HCT116 (cell line): ENCODE measurements at regions of chr6 and their contacts with region 1.

Region 1: DNA sequence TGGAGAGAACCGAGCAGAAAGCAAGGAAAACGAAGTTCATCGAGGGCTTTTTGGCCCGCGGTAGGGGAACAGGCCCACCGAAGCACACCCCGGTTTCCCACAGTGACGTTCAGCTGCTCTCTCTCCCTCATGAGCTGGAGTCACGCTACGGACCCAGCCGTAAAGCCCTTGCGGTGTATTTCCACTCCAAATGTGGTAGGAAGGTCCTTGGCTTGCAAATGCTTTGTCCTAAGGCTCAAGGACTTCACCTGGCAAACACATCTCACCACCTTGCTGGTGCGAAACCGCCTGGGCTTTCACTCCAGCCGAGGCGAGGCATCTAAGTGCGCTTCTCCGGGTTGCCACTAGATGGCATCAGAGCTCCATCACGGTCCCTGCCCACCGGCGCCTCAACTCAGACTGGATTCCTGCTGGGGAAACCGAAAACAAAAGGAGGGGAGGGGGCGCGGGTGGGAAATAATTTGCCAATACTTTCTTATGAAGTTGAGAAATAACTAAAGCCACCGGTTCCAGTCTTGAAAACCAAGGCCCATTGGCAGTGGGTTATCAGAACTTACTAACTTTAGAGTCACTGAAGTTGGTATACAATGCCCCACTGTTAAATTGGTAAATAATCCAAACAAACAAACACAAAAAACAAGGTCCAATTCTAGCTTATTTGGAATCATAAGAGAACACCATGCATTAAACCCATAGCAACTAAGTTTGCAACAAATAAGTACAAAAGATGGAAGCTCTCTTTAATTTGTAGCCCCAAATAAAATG is 13.4 kb upstream of the FOXC1 start:
- DNase-seq: no peak
- ATAC-seq: peak; percentile 95
- H3K4me3 ChIP-seq: no peak overlapping the region
- H3K27ac ChIP-seq: no peak overlapping the region
- H3K4me1 ChIP-seq: peaks cover 2 to 7% of the 10 kb centered on the region in 2 experiments; a peak in 2 of 4 replicates
- H3K27me3 ChIP-seq: no peaks in the 10 kb centered on the region
- CTCF ChIP-seq: peak; percentile 81 to 90 (median 89)
- POLR2A ChIP-seq: no peak
- RAD21 ChIP-seq: peak; percentile 95

Region 2: DNA sequence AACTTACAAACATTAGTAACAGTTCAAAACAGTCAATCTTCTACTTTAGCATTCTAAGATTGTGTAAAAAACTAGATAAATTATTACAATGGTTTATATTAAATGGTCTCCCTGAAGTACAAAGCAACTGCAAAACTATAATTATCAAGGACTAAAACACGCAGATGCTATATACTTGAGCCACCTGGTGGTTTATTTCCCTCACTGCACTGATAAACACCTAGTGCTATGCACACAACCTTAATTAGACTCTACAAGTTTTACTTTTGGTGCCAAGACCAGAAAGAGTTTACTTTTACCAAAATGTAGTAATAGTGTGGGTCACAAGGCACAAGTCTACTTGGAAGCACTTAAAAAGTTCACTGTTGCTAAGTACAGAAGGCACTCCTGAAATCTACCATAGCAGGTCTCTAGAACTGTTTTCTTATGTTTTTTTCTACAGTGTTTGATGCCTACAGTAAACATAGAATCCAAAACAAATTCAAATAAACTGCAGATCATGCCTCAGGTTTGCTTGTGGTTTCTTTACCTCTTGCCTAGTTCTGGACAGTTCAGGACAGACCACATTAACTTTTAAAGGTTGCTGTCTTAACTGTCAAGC is 599.9 kb after region 1 on chr6:
- CTCF ChIA-PET with region 1: no interaction called
- POLR2A ChIA-PET with region 1: no interaction called
- RAD21 ChIA-PET with region 1: no interaction called
- intact Hi-C with region 1: loop called (anchors 2 kb)
- DNase-seq: peak; percentile 19
- ATAC-seq: peak; percentile 67
- H3K4me3 ChIP-seq: no peak overlapping the region
- H3K27ac ChIP-seq: no peak overlapping the region
- H3K4me1 ChIP-seq: peaks cover 4 to 10% of the 10 kb centered on the region in 2 experiments; a peak in 3 of 4 replicates
- H3K27me3 ChIP-seq: no peaks in the 10 kb centered on the region
- CTCF ChIP-seq: peak; percentile 41 to 59 (median 47); a peak in 5 of 6 replicates
- POLR2A ChIP-seq: no peak
- RAD21 ChIP-seq: peak; percentile 69

Region 3: DNA sequence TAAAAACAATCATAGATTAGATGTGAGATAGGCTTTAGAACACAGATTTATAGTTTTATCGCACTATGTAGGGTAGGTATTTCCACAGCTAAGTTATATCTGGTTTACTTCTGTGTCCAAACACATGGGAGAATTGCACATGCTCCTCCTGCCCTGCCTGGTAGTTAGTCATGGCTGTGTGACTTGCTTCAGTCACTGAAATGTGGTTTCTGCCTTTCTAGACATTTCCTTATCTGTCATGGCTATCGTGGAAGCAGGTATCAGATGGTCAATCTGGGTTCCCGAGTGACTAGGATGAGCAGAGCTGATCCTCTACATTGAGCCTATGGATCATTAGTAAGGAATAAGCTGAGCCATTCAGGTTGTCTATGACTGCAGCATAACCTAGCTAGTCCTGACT is 766.9 kb after region 1 on chr6:
- CTCF ChIA-PET with region 1: no interaction called
- POLR2A ChIA-PET with region 1: no interaction called
- RAD21 ChIA-PET with region 1: no interaction called
- intact Hi-C with region 1: no loop called
- DNase-seq: no peak
- ATAC-seq: no peak
- H3K4me3 ChIP-seq: no peak overlapping the region
- H3K27ac ChIP-seq: no peak overlapping the region
- H3K4me1 ChIP-seq: no peaks in the 10 kb centered on the region
- H3K27me3 ChIP-seq: no peaks in the 10 kb centered on the region
- CTCF ChIP-seq: no peak
- POLR2A ChIP-seq: no peak
- RAD21 ChIP-seq: no peak

Region 4: GRCh38 chr6:2448820-2449571 is 852.7 kb after region 1 on chr6:
- CTCF ChIA-PET with region 1: interaction called, 3 read pairs
- POLR2A ChIA-PET with region 1: no interaction called
- RAD21 ChIA-PET with region 1: no interaction called
- intact Hi-C with region 1: loop called (anchors 2 kb)
- DNase-seq: peak; percentile 59
- ATAC-seq: peak; percentile 89
- H3K4me3 ChIP-seq: no peak overlapping the region
- H3K27ac ChIP-seq: no peak overlapping the region
- H3K4me1 ChIP-seq: peaks cover 0 to 4% of the 10 kb centered on the region in 2 experiments; a peak in 1 of 4 replicates
- H3K27me3 ChIP-seq: no peaks in the 10 kb centered on the region
- CTCF ChIP-seq: peak; percentile 69 to 83 (median 83)
- POLR2A ChIP-seq: no peak
- RAD21 ChIP-seq: peak; percentile 94

Region 5: DNA sequence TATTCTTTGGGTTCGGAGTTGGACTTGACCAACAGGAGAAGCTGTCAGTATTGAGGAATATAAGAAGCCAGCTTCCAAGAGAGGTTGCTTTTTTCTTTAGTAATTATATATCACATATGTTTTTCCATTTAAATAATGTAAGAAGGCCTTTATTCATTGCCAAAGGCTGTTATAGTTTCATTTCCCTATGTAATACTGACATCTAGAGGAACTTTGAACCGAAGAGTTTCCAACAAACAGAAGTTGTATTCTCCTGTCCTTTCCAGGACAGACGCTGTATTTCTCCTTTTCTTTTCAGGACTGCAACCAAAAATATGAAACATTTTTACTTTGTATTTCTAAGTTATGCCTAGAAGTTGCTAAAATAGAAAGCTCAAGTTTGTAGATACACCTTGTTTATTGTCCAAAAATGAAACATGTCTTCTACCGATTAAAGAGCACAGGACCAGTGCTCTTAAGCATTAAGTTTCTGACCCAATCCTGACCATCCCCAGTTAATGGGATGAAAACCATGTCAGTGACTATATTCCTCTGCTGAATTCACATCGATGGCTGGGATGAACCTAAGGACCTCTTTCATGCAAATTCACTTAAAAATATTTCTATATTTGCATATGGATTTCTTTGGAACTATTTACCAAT is 1099.3 kb after region 1 on chr6:
- CTCF ChIA-PET with region 1: interaction called, 5 read pairs
- POLR2A ChIA-PET with region 1: no interaction called
- RAD21 ChIA-PET with region 1: no interaction called
- intact Hi-C with region 1: loop called (anchors 2 kb)
- DNase-seq: peak; percentile 36
- ATAC-seq: peak; percentile 84
- H3K4me3 ChIP-seq: no peak overlapping the region
- H3K27ac ChIP-seq: no peak overlapping the region
- H3K4me1 ChIP-seq: no peaks in the 10 kb centered on the region
- H3K27me3 ChIP-seq: 0 out of 2 replicates have a peak, but pooled peaks cover 6% of the 10 kb centered on the region
- CTCF ChIP-seq: peak; percentile 29 to 67 (median 53); a peak in 4 of 6 replicates
- POLR2A ChIP-seq: no peak
- RAD21 ChIP-seq: peak; percentile 91

Region 6: GRCh38 chr6:2744209-2744771 is 1148.0 kb after region 1 on chr6:
- CTCF ChIA-PET with region 1: interaction called, 7 read pairs
- POLR2A ChIA-PET with region 1: no interaction called
- RAD21 ChIA-PET with region 1: no interaction called
- intact Hi-C with region 1: loop called (anchors 1 kb)
- DNase-seq: no peak
- ATAC-seq: peak; percentile 81
- H3K4me3 ChIP-seq: no peak overlapping the region
- H3K27ac ChIP-seq: no peak overlapping the region
- H3K4me1 ChIP-seq: peaks cover 0 to 5% of the 10 kb centered on the region in 2 experiments; a peak in 1 of 4 replicates
- H3K27me3 ChIP-seq: no peaks in the 10 kb centered on the region
- CTCF ChIP-seq: peak; percentile 36 to 42 (median 41); a peak in 5 of 6 replicates
- POLR2A ChIP-seq: no peak
- RAD21 ChIP-seq: peak; percentile 63

Region 7: GRCh38 chr6:3052481-3053230 is 1456.4 kb after region 1 on chr6:
- CTCF ChIA-PET with region 1: no interaction called
- POLR2A ChIA-PET with region 1: no interaction called
- RAD21 ChIA-PET with region 1: no interaction called
- intact Hi-C with region 1: loop called (anchors 10 kb)
- DNase-seq: no peak
- ATAC-seq: no peak
- H3K4me3 ChIP-seq: peak overlapping the region; percentile 57 to 63
- H3K27ac ChIP-seq: no peak overlapping the region
- H3K4me1 ChIP-seq: peaks cover 10 to 24% of the 10 kb centered on the region in 2 experiments; a peak in 2 of 4 replicates
- H3K27me3 ChIP-seq: no peaks in the 10 kb centered on the region
- CTCF ChIP-seq: no peak
- POLR2A ChIP-seq: no peak
- RAD21 ChIP-seq: no peak